ENCODE measurements at regions of chr10 and their contacts with region 1.

Region 1: GRCh38 chr10:96642973-96643372 is 56.2 kb upstream of the TM9SF3 start:
- DNase-seq: peak; percentile 84
- ATAC-seq: peak; percentile 84
- H3K4me3 Mint-ChIP-seq: no peak overlapping the region
- H3K27ac Mint-ChIP-seq: no peak overlapping the region
- H3K4me1 Mint-ChIP-seq: peaks cover 28% of the 10 kb centered on the region
- H3K27me3 Mint-ChIP-seq: peaks cover 3% of the 10 kb centered on the region

Region 2: GRCh38 chr10:96073722-96074121 is 569.3 kb before region 1 on chr10:
- CTCF ChIA-PET with region 1: no interaction called
- POLR2A ChIA-PET with region 1: no interaction called
- DNase-seq: no peak
- ATAC-seq: peak; percentile 81
- H3K4me3 Mint-ChIP-seq: no peak overlapping the region
- H3K27ac Mint-ChIP-seq: no peak overlapping the region
- H3K4me1 Mint-ChIP-seq: peaks cover 28% of the 10 kb centered on the region
- H3K27me3 Mint-ChIP-seq: no peaks in the 10 kb centered on the region

Region 3: DNA sequence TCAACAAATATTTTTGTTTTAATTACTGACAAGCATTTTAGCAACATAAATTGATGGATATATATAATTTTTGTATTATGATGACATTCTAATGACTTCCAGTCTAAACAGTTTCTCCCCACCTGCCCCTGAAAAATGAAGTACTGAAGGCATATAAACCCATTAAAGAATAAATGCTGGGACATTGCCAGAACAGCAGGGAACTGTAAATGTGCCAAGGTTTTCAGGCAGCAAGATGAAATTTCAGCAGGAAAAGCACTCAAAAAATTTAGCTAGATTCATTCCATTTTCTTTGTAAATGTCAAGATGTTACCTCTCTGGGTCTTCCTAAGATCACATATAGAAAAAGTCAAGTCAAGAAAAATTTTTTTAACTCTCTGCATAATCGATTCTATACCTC is 118.2 kb before region 1 on chr10:
- CTCF ChIA-PET with region 1: no interaction called
- POLR2A ChIA-PET with region 1: no interaction called
- DNase-seq: no peak
- ATAC-seq: no peak
- H3K4me3 Mint-ChIP-seq: no peak overlapping the region
- H3K27ac Mint-ChIP-seq: no peak overlapping the region
- H3K4me1 Mint-ChIP-seq: no peaks in the 10 kb centered on the region
- H3K27me3 Mint-ChIP-seq: no peaks in the 10 kb centered on the region

Region 4: DNA sequence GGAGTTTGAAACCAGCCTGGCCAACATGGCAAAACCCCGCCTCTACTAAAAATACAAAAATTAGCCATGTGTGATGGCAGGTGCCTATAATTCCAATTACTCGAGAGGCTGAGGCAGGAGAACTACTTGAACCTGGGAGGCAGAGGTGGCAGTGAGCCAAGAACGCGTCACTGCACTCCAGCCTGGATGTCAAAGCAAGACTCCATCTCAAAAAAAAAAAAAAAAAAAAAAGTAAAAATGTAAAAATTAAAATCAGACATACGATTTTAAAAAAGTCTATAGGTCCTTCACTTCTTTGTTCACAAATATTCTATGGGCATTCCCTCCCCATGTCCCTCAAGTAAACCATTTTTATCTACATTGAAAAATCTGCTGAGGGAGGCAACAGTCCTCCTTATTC is 94.4 kb before region 1 on chr10:
- CTCF ChIA-PET with region 1: no interaction called
- POLR2A ChIA-PET with region 1: no interaction called
- DNase-seq: no peak
- ATAC-seq: no peak
- H3K4me3 Mint-ChIP-seq: no peak overlapping the region
- H3K27ac Mint-ChIP-seq: no peak overlapping the region
- H3K4me1 Mint-ChIP-seq: no peaks in the 10 kb centered on the region
- H3K27me3 Mint-ChIP-seq: no peaks in the 10 kb centered on the region

Region 5: DNA sequence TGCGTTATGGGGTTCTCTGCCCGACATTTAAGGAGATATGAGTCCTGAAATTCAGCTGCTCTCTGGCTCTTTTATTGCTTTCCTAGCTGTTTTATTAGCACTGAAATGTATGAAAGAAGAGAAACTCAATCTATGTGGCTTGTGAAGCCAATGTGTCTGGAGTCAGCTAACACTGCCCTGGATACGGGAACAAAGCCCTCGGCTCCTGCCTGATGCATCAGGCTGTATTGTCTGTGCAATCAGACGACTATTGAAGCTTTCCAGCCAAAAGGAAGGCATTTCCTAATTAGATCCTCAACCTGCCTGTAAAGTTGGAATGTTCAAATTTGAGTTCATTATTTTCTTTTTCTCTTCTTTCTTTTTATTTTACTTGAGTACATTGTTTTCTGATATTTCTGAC is 34.2 kb before region 1 on chr10:
- CTCF ChIA-PET with region 1: no interaction called
- POLR2A ChIA-PET with region 1: no interaction called
- DNase-seq: no peak
- ATAC-seq: no peak
- H3K4me3 Mint-ChIP-seq: no peak overlapping the region
- H3K27ac Mint-ChIP-seq: no peak overlapping the region
- H3K4me1 Mint-ChIP-seq: peaks cover 17% of the 10 kb centered on the region
- H3K27me3 Mint-ChIP-seq: no peaks in the 10 kb centered on the region

Region 6: DNA sequence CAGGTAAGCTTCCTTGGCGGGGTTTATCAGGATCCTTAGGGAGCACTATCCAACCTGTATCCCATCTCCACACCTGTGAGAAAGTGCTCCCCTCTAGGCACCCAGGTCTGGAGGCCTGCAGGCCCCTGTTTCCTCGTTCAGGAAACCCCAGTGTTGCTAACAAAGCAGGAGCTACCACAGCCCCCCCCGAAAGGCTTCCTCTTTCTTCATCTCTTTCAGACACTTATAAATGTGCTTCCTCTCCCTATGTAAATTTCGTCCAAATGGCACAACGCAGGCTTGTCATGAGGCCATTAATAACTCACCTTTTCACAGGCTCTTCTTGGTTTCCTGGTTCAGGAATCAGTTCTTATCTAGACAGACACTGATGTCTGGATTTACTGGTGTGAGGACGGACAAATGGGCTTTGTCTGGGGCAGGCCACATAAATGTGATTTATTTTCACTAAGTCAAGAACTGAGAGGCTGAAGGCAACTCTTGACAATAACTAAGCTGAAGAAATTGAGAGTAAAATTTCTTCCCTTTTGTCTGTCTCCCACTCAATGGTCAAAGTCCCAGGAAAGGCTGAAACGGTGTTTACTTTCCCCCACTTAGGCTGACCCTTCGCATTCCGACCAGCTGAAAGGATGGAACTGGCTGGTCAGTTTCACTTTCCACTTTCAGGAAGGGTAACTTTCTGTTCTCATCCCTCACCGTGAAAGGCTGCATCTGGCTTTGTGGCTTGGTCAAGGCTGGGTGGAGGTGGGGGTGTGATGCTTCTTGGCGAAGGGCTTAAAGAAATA is 30.5 kb after region 1 on chr10:
- CTCF ChIA-PET with region 1: interaction called, 10 read pairs
- POLR2A ChIA-PET with region 1: no interaction called
- DNase-seq: no peak
- ATAC-seq: no peak
- H3K4me3 Mint-ChIP-seq: no peak overlapping the region
- H3K27ac Mint-ChIP-seq: peak overlapping the region; percentile 58
- H3K4me1 Mint-ChIP-seq: peaks cover 38% of the 10 kb centered on the region
- H3K27me3 Mint-ChIP-seq: peaks cover 3% of the 10 kb centered on the region

Region 7: GRCh38 chr10:96695366-96695765 is 52.4 kb after region 1 on chr10:
- CTCF ChIA-PET with region 1: interaction called, 10 read pairs
- POLR2A ChIA-PET with region 1: no interaction called
- DNase-seq: peak; percentile 32
- ATAC-seq: peak; percentile 69
- H3K4me3 Mint-ChIP-seq: peak overlapping the region; percentile 34
- H3K27ac Mint-ChIP-seq: peak overlapping the region; percentile 28
- H3K4me1 Mint-ChIP-seq: peaks cover 33% of the 10 kb centered on the region
- H3K27me3 Mint-ChIP-seq: no peaks in the 10 kb centered on the region

Region 8: GRCh38 chr10:96743988-96744585 is 101.1 kb after region 1 on chr10:
- CTCF ChIA-PET with region 1: interaction called, 10 read pairs
- POLR2A ChIA-PET with region 1: no interaction called
- DNase-seq: no peak
- ATAC-seq: no peak
- H3K4me3 Mint-ChIP-seq: no peak overlapping the region
- H3K27ac Mint-ChIP-seq: peak overlapping the region; percentile 18
- H3K4me1 Mint-ChIP-seq: peaks cover 16% of the 10 kb centered on the region
- H3K27me3 Mint-ChIP-seq: peaks cover 7% of the 10 kb centered on the region

Region 9: DNA sequence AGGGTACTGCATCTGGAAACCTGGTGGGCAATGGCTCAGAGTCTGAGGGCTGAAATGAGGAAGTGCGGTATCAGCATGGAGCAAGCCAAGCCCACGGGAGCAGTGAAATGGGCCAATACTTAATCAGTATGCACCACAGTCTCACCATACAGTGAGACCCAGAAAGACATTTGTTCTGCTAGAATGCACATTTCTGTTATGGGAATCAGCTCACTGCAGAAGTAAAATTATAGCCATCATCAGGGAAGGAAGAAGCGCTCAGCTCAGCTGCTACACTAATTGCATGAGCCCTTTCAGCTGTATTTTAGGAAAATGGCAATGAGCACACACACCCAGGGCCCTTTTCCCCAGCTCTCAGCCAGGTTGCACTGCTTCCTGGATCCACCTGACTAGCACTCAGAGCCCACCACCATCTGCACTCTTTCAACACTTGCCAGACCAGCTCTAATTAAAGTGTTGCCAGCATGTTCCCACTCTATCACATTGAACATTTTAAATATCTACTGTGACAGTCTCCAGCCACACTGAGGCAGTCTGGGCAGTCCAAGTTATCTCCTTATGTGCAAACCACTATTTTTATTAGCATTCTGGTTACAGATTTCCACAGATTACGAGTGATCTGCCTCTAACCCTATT is 121.6 kb after region 1 on chr10:
- CTCF ChIA-PET with region 1: interaction called, 19 read pairs
- POLR2A ChIA-PET with region 1: no interaction called
- DNase-seq: no peak
- ATAC-seq: no peak
- H3K4me3 Mint-ChIP-seq: no peak overlapping the region
- H3K27ac Mint-ChIP-seq: no peak overlapping the region
- H3K4me1 Mint-ChIP-seq: peaks cover 2% of the 10 kb centered on the region
- H3K27me3 Mint-ChIP-seq: peaks cover 7% of the 10 kb centered on the region

Region 10: GRCh38 chr10:96830511-96831199 is 187.7 kb after region 1 on chr10:
- CTCF ChIA-PET with region 1: interaction called, 58 read pairs
- POLR2A ChIA-PET with region 1: interaction called, 4 read pairs
- DNase-seq: peak; percentile 90
- ATAC-seq: no peak
- H3K4me3 Mint-ChIP-seq: peak overlapping the region; percentile 89
- H3K27ac Mint-ChIP-seq: peak overlapping the region; percentile 80
- H3K4me1 Mint-ChIP-seq: peaks cover 41% of the 10 kb centered on the region
- H3K27me3 Mint-ChIP-seq: no peaks in the 10 kb centered on the region

Region 11: GRCh38 chr10:97025613-97026242 is 382.8 kb after region 1 on chr10:
- CTCF ChIA-PET with region 1: interaction called, 20 read pairs
- POLR2A ChIA-PET with region 1: no interaction called
- DNase-seq: peak; percentile 76
- ATAC-seq: peak; percentile 70
- H3K4me3 Mint-ChIP-seq: no peak overlapping the region
- H3K27ac Mint-ChIP-seq: no peak overlapping the region
- H3K4me1 Mint-ChIP-seq: peaks cover 7% of the 10 kb centered on the region
- H3K27me3 Mint-ChIP-seq: peaks cover 9% of the 10 kb centered on the region